BJ (cell line): ENCODE measurements at regions of chr2 and their contacts with region 1.

Region 1: DNA sequence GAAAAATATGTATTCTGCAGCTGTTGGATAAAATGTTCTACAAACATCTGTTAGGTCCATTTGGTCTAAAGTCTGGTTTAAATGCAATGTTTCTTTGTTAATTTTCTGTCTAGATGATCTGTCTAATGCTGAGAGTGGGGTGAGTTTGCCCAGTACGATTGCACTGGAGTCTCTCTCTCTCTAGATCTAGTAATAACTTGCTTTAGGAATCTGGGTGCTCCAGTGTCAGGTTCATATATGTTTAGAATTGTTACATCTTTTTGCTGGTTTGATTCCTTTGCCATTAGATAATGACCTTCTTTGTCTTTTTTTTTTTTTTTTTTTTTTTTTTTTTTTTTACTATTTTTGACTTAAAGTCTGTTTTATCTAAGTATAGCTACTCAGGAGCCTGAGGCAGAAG is 10.4 kb downstream of the GCC2 start:
- DNase-seq: no peak
- H3K4me3 ChIP-seq: no peak overlapping the region
- H3K27me3 ChIP-seq: no peaks in the 10 kb centered on the region
- CTCF ChIP-seq: no peak

Region 2: GRCh38 chr2:108215794-108216211 is 243.6 kb before region 1 on chr2:
- CTCF ChIA-PET with region 1: no interaction called
- POLR2A ChIA-PET with region 1: no interaction called
- DNase-seq: no peak
- H3K4me3 ChIP-seq: no peak overlapping the region
- H3K27me3 ChIP-seq: no peaks in the 10 kb centered on the region
- CTCF ChIP-seq: peak; percentile 55

Region 3: GRCh38 chr2:108448678-108449493 is 10.6 kb before region 1 on chr2 and contains the start of gene GCC2:
- CTCF ChIA-PET with region 1: interaction called, 3 read pairs
- POLR2A ChIA-PET with region 1: interaction called, 13 read pairs
- DNase-seq: peak; percentile 50
- H3K4me3 ChIP-seq: peak within 1 kb of the TSS; percentile 71
- H3K27me3 ChIP-seq: no peaks in the 10 kb centered on the region
- CTCF ChIP-seq: no peak
- polyA plus RNA-seq, gene GCC2: 4.7 and 10.4 TPM in 2 replicates